Mammary epithelial cell (primary cell): ENCODE measurements at regions of chr9 and their contacts with region 1.

Region 1: GRCh38 chr9:85516976-85517637 is 224.6 kb downstream of the AGTPBP1 start:
- DNase-seq: peak; percentile 86
- H3K4me3 ChIP-seq: no peak overlapping the region
- H3K27ac ChIP-seq: no peak overlapping the region
- H3K4me1 ChIP-seq: peaks cover 13% of the 10 kb centered on the region
- H3K27me3 ChIP-seq: no peaks in the 10 kb centered on the region
- CTCF ChIP-seq: no peak

Region 2: GRCh38 chr9:85420750-85421149 is 96.4 kb before region 1 on chr9:
- CTCF ChIA-PET with region 1: no interaction called
- dilution Hi-C with region 1: no loop called
- in situ Hi-C with region 1: no loop called
- intact Hi-C with region 1: no loop called
- DNase-seq: no peak
- H3K4me3 ChIP-seq: no peak overlapping the region
- H3K27ac ChIP-seq: no peak overlapping the region
- H3K4me1 ChIP-seq: no peaks in the 10 kb centered on the region
- H3K27me3 ChIP-seq: no peaks in the 10 kb centered on the region
- CTCF ChIP-seq: no peak

Region 3: GRCh38 chr9:85541847-85542246 is 24.7 kb after region 1 on chr9:
- CTCF ChIA-PET with region 1: no interaction called
- dilution Hi-C with region 1: no loop called
- in situ Hi-C with region 1: no loop called
- intact Hi-C with region 1: loop called (anchors 2 kb)
- DNase-seq: no peak
- H3K4me3 ChIP-seq: no peak overlapping the region
- H3K27ac ChIP-seq: no peak overlapping the region
- H3K4me1 ChIP-seq: peaks cover under 1% of the 10 kb centered on the region
- H3K27me3 ChIP-seq: no peaks in the 10 kb centered on the region
- CTCF ChIP-seq: no peak